Posterior cingulate gyrus (tissue), 11 donors: ENCODE measurements at regions of chr3 and their contacts with region 1.

Region 1: DNA sequence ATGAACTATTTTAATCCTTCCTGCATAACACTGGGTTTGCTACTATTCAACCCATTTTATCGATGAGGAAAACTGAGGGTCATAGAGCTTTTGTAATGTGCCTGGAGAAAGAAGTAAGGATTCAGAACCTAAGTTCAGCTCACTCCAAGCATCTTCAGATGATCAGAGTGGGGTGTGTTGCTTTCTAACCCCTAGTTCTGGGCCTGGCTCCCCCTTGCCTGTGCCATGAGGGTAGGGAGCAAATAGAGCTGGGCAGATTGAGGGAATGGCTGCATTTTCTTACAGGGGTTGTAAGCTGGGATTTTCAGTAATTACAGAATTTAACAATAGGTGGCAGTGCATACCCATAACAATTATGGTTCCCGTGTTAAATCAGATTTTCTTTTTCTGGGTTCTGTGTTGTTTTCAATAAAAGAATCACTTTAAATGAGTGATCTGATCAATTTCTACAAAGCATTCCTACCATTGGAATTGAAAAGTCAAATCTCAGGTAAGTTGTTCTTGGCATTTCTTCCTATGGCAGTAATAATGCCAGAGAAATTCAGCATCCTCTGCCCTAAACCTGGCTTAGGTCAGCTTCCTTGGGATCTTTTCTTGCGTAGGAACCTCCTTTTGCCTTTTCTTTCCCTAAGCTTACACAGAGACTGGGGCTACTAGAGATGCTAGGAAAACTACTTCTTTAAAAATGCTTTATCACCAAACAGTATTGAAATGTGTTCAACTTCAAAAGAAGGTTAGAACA is 103.8 kb upstream of the IL12A start:
- DNase-seq: no peak

Region 2: DNA sequence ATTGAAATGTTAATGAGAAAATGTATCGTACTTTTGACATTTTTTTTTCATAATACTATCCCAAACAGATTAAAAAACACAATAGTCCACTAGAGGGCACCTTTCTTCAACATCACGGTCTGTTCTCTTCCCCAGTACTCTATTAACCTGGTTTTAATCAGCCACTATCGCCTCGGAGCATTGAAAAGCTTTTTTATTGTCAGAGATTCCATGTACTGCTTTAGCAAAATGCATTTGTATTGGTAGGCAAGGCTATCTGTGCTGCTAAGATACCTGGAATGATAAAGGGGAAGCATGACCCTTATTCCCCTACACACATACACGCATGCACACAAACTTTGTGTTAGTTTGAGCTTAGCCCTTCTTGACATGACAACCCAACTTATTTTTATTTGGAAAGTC is 56.3 kb before region 1 on chr3:
- intact Hi-C with region 1: loop called (anchors 5 kb)
- DNase-seq: no peak

Region 3: GRCh38 chr3:159852821-159853505 is 31.9 kb before region 1 on chr3:
- intact Hi-C with region 1: no loop called
- DNase-seq: peak in 8 of 10 donors; percentile 45 to 92 (median 64)

Region 4: DNA sequence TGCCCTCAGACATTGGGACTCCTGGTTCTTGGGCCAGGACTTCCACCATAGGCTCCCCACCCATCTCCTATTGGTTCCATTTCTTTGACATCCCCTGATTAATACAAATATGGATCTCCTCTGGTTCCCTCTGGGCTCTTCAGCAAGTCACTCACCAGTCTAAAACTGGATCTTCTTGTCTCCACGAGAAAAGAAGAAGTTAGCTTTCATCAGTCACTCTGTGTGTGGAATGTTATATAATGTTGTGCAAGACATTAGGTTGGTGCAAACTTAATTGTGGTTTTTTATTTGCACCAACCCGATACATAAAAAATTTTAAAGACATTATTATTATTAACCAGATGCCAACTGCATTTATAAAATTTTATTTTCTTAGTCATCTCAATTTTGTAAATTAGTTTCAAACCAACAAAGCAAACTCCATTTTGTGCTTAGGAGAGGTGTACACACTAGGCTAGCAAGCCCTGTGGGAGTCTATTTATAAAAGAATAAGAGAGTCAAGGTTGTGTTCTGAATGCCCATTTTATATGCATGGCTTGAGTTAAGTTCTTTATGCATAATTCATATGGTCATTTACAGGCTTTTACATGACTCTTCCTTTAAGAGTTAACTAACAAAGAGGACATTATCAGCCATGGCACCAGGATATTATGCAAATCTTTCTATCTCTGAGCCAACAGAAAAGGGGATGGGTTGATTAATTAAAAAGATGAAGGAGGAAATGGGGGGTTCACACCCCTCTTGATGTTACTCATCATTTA is 68.7 kb after region 1 on chr3:
- intact Hi-C with region 1: no loop called
- DNase-seq: no peak

Region 5: GRCh38 chr3:159988617-159989271 is 103.9 kb after region 1 on chr3 and contains the start of gene IL12A:
- intact Hi-C with region 1: loop called (anchors 5 kb)
- DNase-seq: peak; percentile 49 to 95 (median 80)